Kidney (tissue), 22 donors: ENCODE measurements at regions of chr2 and their contacts with region 1.

Region 1: GRCh38 chr2:226800941-226801784 is 1.5 kb upstream of the IRS1 start:
- DNase-seq: peak; percentile 94 to 96 (median 95)
- H3K4me3 ChIP-seq: peak overlapping the region; percentile 74 to 85 (median 82)
- H3K27ac ChIP-seq: peak overlapping the region; percentile 86 to 87
- H3K4me1 ChIP-seq: peaks cover 0 to 16% (median 10%) of the 10 kb centered on the region in 3 donors
- H3K27me3 ChIP-seq: no peaks in the 10 kb centered on the region
- CTCF ChIP-seq: no peak

Region 2: DNA sequence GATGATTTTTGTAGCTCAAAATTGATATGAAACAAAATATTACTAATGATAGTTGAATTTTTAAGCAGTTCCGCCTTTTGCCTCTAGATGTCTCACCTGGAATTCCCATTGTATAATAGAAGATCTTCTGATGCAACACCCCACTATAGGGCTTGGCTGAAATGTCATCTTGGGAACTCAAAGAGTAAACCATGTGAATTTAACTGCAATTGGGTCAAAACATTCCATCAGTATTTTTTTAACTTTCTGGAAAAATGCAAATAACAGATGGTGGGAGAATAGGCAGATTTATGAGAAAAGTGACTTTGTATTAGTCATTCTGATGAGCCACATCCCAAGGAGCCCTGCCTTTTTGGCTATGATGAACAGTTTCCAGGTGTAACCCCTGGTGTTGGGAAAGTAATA is 911.7 kb before region 1 on chr2:
- intact Hi-C with region 1: loop called (anchors 10 kb)
- DNase-seq: peak in 2 of 5 donors; percentile 42 to 58
- H3K4me3 ChIP-seq: no peak overlapping the region
- H3K27ac ChIP-seq: no peak overlapping the region
- H3K4me1 ChIP-seq: no peaks in the 10 kb centered on the region
- H3K27me3 ChIP-seq: no peaks in the 10 kb centered on the region
- CTCF ChIP-seq: peak; percentile 55

Region 3: GRCh38 chr2:226699321-226699720 is 101.8 kb before region 1 on chr2:
- intact Hi-C with region 1: no loop called
- DNase-seq: no peak
- H3K4me3 ChIP-seq: no peak overlapping the region
- H3K27ac ChIP-seq: no peak overlapping the region
- H3K4me1 ChIP-seq: no peaks in the 10 kb centered on the region
- H3K27me3 ChIP-seq: no peaks in the 10 kb centered on the region
- CTCF ChIP-seq: no peak